RWPE1 (cell line): ENCODE measurements at regions of chr17 and their contacts with region 1.

Region 1: GRCh38 chr17:78082988-78083387 is 45.6 kb downstream of the TMC6 start:
- DNase-seq: peak; percentile 10
- H3K27ac ChIP-seq: no peak overlapping the region
- CTCF ChIP-seq: no peak

Region 2: GRCh38 chr17:78019367-78019975 is 63.5 kb before region 1 on chr17:
- CTCF ChIA-PET with region 1: interaction called, 16 read pairs
- POLR2A ChIA-PET with region 1: no interaction called
- DNase-seq: no peak
- H3K27ac ChIP-seq: no peak overlapping the region
- CTCF ChIP-seq: peak; percentile 76

Region 3: GRCh38 chr17:78104540-78104941 is 21.6 kb after region 1 on chr17:
- CTCF ChIA-PET with region 1: interaction called, 10 read pairs
- POLR2A ChIA-PET with region 1: no interaction called
- DNase-seq: no peak
- H3K27ac ChIP-seq: no peak overlapping the region
- CTCF ChIP-seq: no peak

Region 4: GRCh38 chr17:78250891-78251794 is 168.2 kb after region 1 on chr17:
- CTCF ChIA-PET with region 1: interaction called, 13 read pairs
- POLR2A ChIA-PET with region 1: no interaction called
- DNase-seq: peak; percentile 94
- H3K27ac ChIP-seq: peak overlapping the region; percentile 38
- CTCF ChIP-seq: peak; percentile 100